ENCODE measurements at regions of chr14 and their contacts with region 1.

Region 1: DNA sequence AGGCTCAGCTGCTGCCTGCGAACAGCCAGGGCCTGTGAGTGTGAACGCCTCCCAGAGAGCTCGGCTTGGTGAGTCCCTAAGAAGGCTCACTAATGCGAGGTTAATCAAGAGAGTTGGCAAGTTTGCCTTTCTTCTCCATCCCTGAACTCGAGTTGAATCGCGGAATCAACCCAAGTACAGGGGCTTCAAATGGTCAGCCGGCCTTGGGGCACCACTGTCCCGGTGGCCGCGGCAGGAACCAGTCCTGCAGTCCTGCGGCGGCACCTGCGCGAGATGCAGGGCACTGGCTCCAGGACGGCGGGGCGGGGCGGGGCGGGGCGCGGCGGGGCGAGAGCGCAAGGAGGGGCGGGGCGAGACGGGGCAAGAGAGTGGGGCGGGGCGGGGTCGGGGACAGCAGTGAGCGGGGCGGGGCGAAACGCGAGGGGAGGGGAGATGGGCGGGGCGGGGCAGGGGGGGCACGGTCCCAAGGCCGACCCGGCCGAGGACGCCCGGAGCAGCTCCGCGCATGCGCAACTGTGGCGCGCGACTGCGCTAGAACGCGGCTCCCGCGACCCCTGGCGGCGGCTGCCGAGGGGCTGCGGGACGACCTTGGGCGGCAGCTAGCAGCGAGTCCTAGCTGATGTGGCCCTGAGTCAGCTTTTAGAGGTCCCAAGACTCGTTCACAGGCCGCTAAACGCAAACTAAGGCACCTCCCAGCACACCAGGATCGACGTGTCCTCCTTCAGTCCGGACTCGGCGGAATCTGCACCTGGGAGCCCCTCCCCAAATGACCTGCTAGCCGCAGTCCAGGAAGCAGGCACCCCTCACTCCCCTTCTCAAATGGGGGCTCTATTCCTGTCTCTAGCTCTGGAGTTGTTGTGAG is 58.0 kb downstream of the TTC7B start:
- DNase-seq: peak; percentile 97
- ATAC-seq: peak; percentile 93
- H3K4me3 Mint-ChIP-seq: peak overlapping the region; percentile 74
- H3K27ac Mint-ChIP-seq: peak overlapping the region; percentile 79
- H3K4me1 Mint-ChIP-seq: peaks cover 32% of the 10 kb centered on the region
- H3K27me3 Mint-ChIP-seq: peaks cover 2% of the 10 kb centered on the region

Region 2: DNA sequence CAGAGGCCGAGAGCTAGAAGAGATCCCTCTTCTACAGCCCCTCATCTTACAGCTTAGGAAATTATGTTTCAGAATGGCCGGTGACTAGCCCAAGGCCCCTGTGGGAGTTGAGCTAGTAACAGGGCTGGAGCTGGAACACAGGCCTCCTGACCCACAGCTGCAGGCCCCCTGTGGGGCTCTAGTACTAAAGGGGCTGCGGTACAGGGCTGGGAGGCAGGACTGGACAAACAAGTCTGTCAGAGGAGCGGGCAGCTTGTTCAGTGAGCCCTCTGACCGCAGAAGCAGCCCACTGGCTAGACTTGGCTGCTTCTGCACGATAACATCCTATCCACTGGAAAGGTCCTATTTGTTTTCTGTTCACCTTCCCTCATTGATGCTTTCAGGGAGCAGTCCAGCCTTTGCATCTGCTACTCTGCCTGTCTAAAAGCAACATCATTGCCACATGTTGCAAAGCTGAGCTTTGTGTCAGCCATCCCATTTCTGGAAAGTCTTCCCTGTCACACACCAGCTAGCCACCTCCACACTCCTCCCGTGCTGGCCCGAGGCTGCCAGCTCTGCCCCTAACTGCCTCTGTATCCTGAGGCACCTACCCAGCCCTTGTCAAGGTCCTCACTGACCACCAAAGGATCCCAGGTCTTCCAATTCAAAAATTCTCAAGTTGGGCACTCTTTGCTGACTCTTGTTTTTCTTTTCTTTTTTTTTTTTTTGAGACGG is 491.7 kb before region 1 on chr14:
- CTCF ChIA-PET with region 1: interaction called, 4 read pairs
- POLR2A ChIA-PET with region 1: interaction called, 12 read pairs
- intact Hi-C with region 1: no loop called
- DNase-seq: no peak
- ATAC-seq: no peak
- H3K4me3 Mint-ChIP-seq: no peak overlapping the region
- H3K27ac Mint-ChIP-seq: no peak overlapping the region
- H3K4me1 Mint-ChIP-seq: peaks cover 3% of the 10 kb centered on the region
- H3K27me3 Mint-ChIP-seq: no peaks in the 10 kb centered on the region

Region 3: GRCh38 chr14:90399541-90400444 is 358.5 kb before region 1 on chr14:
- CTCF ChIA-PET with region 1: interaction called, 9 read pairs
- POLR2A ChIA-PET with region 1: interaction called, 3 read pairs
- intact Hi-C with region 1: loop called (anchors 1 to 2 kb)
- DNase-seq: peak; percentile 93
- ATAC-seq: peak; percentile 62
- H3K4me3 Mint-ChIP-seq: peak overlapping the region; percentile 97
- H3K27ac Mint-ChIP-seq: peak overlapping the region; percentile 95
- H3K4me1 Mint-ChIP-seq: peaks cover 53% of the 10 kb centered on the region
- H3K27me3 Mint-ChIP-seq: no peaks in the 10 kb centered on the region

Region 4: GRCh38 chr14:90815822-90816700 is 57.8 kb after region 1 on chr14 and contains the start of gene TTC7B:
- CTCF ChIA-PET with region 1: interaction called, 4 read pairs
- POLR2A ChIA-PET with region 1: no interaction called
- intact Hi-C with region 1: loop called in 1 of 2 experiments (anchors 1 kb)
- DNase-seq: peak; percentile 51
- ATAC-seq: peak; percentile 55
- H3K4me3 Mint-ChIP-seq: peak within 1 kb of the TSS; percentile 61
- H3K27ac Mint-ChIP-seq: peak within 1 kb of the TSS; percentile 15
- H3K4me1 Mint-ChIP-seq: peaks cover 6% of the 10 kb centered on the region
- H3K27me3 Mint-ChIP-seq: peaks cover 11% of the 10 kb centered on the region
- total RNA-seq, gene TTC7B: 5.8 to 8.2 TPM

Region 5: DNA sequence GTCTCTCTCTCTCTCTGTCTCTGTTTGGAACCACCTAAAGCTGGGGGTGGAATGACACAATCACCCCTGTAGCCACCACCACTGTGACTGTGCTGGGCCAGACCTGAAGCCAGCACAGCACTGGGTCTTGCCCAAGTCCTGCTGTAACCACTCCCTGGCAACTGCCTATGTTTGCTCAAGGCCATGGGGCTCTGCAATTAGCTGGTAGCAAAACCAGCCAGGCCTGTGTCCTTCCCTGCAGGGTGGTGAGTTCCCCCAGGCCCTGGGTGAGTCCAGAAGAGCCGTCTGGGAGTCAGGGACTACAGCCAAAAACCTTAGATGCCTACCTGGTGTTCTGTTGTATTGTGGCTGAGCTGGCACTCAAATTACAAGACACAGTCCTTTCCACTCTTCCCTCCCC is 406.4 kb after region 1 on chr14:
- CTCF ChIA-PET with region 1: no interaction called
- POLR2A ChIA-PET with region 1: no interaction called
- intact Hi-C with region 1: no loop called
- DNase-seq: no peak
- ATAC-seq: no peak
- H3K4me3 Mint-ChIP-seq: no peak overlapping the region
- H3K27ac Mint-ChIP-seq: no peak overlapping the region
- H3K4me1 Mint-ChIP-seq: no peaks in the 10 kb centered on the region
- H3K27me3 Mint-ChIP-seq: no peaks in the 10 kb centered on the region

Region 6: GRCh38 chr14:91177073-91178034 is 419.1 kb after region 1 on chr14:
- CTCF ChIA-PET with region 1: interaction called, 9 read pairs
- POLR2A ChIA-PET with region 1: no interaction called
- intact Hi-C with region 1: loop called in 1 of 2 experiments (anchors 5 kb)
- DNase-seq: peak; percentile 79
- ATAC-seq: peak; percentile 81
- H3K4me3 Mint-ChIP-seq: no peak overlapping the region
- H3K27ac Mint-ChIP-seq: peak overlapping the region; percentile 92
- H3K4me1 Mint-ChIP-seq: peaks cover 11% of the 10 kb centered on the region
- H3K27me3 Mint-ChIP-seq: no peaks in the 10 kb centered on the region

Measured in activated CD4-positive, alpha-beta T cell treated with anti-CD3 and anti-CD28 coated beads for 36 hours (primary cell).